ENCODE measurements at regions of chr6 and their contacts with region 1.

Region 1: DNA sequence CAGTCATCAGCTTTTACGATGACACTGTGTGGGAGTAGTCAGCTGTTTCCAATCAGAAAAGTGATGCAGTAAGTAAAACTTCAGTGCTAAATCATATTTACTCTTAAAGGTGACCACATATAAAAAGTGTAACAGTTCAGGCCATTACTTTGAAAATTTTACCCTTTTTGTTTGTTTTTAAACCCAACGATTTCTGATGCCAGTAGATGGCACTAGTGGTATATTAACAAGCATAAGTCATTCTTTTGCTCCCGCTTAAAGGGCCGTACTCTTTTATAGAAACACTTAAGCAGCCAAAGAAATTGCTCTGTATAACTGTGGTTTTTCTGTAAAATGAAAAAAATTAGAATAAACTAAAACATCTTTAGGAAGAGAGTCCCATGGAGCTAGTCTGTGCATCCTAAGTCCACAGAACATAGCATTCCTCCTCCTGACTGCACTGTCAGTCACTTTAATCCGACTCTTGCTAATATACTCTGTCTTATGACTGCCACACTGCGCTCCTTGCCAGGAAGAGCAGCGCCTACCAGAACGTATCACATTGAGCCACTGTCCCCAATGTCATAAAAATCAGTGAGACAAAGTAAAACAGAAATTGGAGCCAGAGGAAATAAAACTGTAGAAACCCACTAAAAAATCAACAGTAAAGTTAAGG is 25.0 kb downstream of the HEBP2 start:
- DNase-seq: no peak
- ATAC-seq: 0 out of 2 replicates have a peak, but pooled peaks have one; percentile 68
- H3K4me3 ChIP-seq: no peak overlapping the region
- H3K27ac ChIP-seq: no peak overlapping the region
- H3K4me1 ChIP-seq: no peaks in the 10 kb centered on the region; the same call in 1 of the 2 replicates
- H3K27me3 ChIP-seq: no peaks in the 10 kb centered on the region
- CTCF ChIP-seq: peak; percentile 69; the same call in 1 of the 2 replicates

Region 2: DNA sequence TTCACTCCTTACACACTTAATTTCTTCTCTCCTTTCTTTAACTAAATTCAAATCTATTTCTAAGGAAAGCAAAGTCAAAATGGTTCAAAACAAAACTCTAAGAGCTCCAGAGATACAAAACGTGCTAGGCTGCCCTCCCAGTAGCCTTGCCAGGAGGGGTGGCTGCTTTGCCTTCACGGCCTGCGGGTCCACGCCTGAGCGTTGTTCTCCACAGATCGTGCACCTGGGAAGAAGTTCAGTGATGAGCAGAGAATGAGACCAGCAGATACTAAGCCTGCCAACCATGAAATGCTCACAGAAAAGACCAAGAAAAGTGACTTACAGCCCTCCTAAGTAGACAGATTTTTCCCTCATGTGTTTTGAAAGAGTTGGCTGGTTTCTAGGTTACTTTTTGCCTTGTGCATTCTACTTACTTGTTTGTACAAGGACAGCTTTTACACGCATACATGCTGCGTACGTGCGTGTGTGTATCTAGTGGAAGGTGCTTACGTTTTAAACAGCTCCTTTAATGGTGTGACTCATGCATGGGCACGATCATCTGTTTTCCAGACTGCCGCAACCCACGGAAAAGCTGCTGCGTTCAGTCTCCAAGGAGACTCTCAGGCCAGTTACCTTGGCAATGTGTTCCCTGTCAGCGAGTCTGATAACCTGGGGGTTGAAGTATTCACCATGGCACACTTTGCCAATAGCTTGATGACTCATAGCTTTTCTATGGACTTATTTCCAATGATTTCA is 178.4 kb before region 1 on chr6:
- CTCF ChIA-PET with region 1: no interaction called
- POLR2A ChIA-PET with region 1: no interaction called
- in situ Hi-C with region 1: no loop called
- intact Hi-C with region 1: no loop called
- DNase-seq: no peak
- ATAC-seq: no peak
- H3K4me3 ChIP-seq: no peak overlapping the region
- H3K27ac ChIP-seq: no peak overlapping the region
- H3K4me1 ChIP-seq: no peaks in the 10 kb centered on the region
- H3K27me3 ChIP-seq: peaks cover 7% of the 10 kb centered on the region; the same call in 1 of the 2 replicates
- CTCF ChIP-seq: no peak

Region 3: GRCh38 chr6:138509371-138509770 is 80.3 kb after region 1 on chr6:
- CTCF ChIA-PET with region 1: no interaction called
- POLR2A ChIA-PET with region 1: no interaction called
- in situ Hi-C with region 1: no loop called
- intact Hi-C with region 1: loop called (anchors 1 kb)
- DNase-seq: peak; percentile 27
- ATAC-seq: no peak
- H3K4me3 ChIP-seq: no peak overlapping the region
- H3K27ac ChIP-seq: no peak overlapping the region
- H3K4me1 ChIP-seq: no peaks in the 10 kb centered on the region
- H3K27me3 ChIP-seq: no peaks in the 10 kb centered on the region
- CTCF ChIP-seq: peak; percentile 61

Region 4: GRCh38 chr6:138517635-138518034 is 88.6 kb after region 1 on chr6:
- CTCF ChIA-PET with region 1: no interaction called
- POLR2A ChIA-PET with region 1: no interaction called
- in situ Hi-C with region 1: no loop called
- intact Hi-C with region 1: loop called (anchors 5 kb)
- DNase-seq: no peak
- ATAC-seq: peak; percentile 67; the same call in 1 of the 2 replicates
- H3K4me3 ChIP-seq: no peak overlapping the region
- H3K27ac ChIP-seq: no peak overlapping the region
- H3K4me1 ChIP-seq: no peaks in the 10 kb centered on the region
- H3K27me3 ChIP-seq: no peaks in the 10 kb centered on the region
- CTCF ChIP-seq: peak; percentile 62

Region 5: GRCh38 chr6:138588805-138589434 is 159.8 kb after region 1 on chr6:
- CTCF ChIA-PET with region 1: interaction called, 3 read pairs
- POLR2A ChIA-PET with region 1: interaction called, 9 read pairs
- in situ Hi-C with region 1: no loop called
- intact Hi-C with region 1: loop called (anchors 1 kb)
- DNase-seq: peak; percentile 74
- ATAC-seq: peak; percentile 50
- H3K4me3 ChIP-seq: no peak overlapping the region
- H3K27ac ChIP-seq: no peak overlapping the region
- H3K4me1 ChIP-seq: peaks cover 24% of the 10 kb centered on the region
- H3K27me3 ChIP-seq: no peaks in the 10 kb centered on the region
- CTCF ChIP-seq: peak; percentile 93

Region 6: DNA sequence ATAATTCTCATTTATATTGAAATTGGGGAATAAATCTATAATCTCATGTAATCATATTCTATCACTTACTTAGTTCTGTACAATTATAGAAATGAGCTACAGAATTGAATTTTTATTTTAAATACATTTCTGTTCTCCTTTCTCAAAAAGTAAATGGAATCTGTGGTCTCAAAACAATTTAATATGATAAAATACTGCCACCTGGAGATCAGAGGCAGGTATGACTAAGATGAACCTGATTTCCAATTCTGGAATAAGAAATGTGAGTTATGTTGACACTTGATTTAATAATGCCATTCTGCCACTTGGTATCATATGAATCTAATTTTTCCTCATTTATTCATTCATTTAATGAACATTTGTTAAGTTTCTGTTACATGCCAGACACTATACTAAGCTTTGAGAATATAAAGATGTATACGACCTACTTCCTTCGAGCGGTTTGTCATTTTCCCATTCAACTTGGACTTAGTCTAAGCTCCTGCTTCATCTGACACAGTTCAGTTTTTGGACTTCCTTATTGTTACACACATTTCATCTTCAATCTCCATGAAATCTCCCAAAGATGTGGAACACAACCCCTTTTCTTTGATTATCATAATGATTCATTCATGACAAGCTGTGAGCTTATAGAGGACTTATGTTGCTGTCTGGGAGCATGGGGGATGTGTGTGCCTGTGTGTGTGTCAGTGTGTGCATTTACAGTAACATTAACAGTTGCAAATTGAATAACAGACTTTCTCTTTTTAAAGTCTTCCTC is 337.0 kb after region 1 on chr6:
- CTCF ChIA-PET with region 1: no interaction called
- POLR2A ChIA-PET with region 1: no interaction called
- in situ Hi-C with region 1: no loop called
- intact Hi-C with region 1: loop called (anchors 2 kb)
- DNase-seq: peak; percentile 22
- ATAC-seq: no peak
- H3K4me3 ChIP-seq: no peak overlapping the region
- H3K27ac ChIP-seq: no peak overlapping the region
- H3K4me1 ChIP-seq: no peaks in the 10 kb centered on the region
- H3K27me3 ChIP-seq: no peaks in the 10 kb centered on the region
- CTCF ChIP-seq: peak; percentile 70; the same call in 1 of the 2 replicates

Region 7: GRCh38 chr6:139240161-139241010 is 811.3 kb after region 1 on chr6:
- CTCF ChIA-PET with region 1: no interaction called
- POLR2A ChIA-PET with region 1: no interaction called
- in situ Hi-C with region 1: no loop called
- intact Hi-C with region 1: no loop called
- DNase-seq: no peak
- ATAC-seq: no peak
- H3K4me3 ChIP-seq: no peak overlapping the region
- H3K27ac ChIP-seq: no peak overlapping the region
- H3K4me1 ChIP-seq: no peaks in the 10 kb centered on the region
- H3K27me3 ChIP-seq: peaks cover 5% of the 10 kb centered on the region; the same call in 1 of the 2 replicates
- CTCF ChIP-seq: no peak